H1 (cell line): ENCODE measurements at regions of chr5 and their contacts with region 1.

Region 1: GRCh38 chr5:141923448-141924352 is at the start of gene DELE1:
- DNase-seq: peak; percentile 69 to 90
- H3K4me3 ChIP-seq: peak within 1 kb of the TSS; percentile 68 to 84 (median 74)
- H3K27ac ChIP-seq: peak within 1 kb of the TSS; percentile 71; the same call in 1 of the 2 replicates
- H3K4me1 ChIP-seq: peaks cover 0 to 3% (median 3%) of the 10 kb centered on the region in 4 experiments; a peak in 3 of 7 replicates
- H3K27me3 ChIP-seq: no peaks in the 10 kb centered on the region
- CTCF ChIP-seq: peak in 1 of 3 experiments; percentile 5; a peak in 1 of 4 replicates
- EP300 ChIP-seq: no peak
- POLR2A ChIP-seq: peak in 1 of 2 experiments; percentile 84; a peak in 2 of 3 replicates
- RAD21 ChIP-seq: peak in 1 of 2 experiments; percentile 9; a peak in 1 of 4 replicates
- total RNA-seq, gene DELE1: 59.6 and 61.4 TPM in 2 replicates

Region 2: DNA sequence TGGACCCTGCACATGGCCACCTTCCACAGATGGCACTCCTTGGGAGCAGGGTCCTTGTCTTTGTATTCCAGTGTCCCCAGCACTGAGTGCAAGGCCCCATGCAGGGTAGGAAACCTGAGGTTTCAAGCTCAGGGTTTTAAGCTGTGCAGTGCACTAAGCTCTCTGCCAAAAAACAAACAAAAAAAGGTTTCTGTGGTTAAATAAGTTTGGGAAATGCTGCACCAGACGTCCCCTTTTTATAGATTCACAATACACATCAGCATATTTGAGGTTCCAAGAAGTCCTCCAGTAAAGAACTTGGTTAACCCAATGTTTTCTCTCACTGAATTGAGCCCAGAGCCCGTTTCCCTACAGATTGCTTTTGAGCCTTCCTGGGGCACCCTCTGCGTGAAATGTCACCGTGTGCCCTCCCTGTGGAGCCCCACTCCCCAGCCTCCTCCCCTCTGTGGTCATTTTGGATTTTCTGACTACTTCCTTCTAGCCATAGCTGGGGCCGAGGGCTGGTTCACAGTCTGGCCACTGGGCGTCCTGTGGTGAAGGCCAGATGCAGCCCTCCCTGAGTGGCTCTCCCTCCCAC is 17.1 kb after region 1 on chr5:
- CTCF ChIA-PET with region 1: interaction called, 5 read pairs
- POLR2A ChIA-PET with region 1: interaction called, 66 read pairs
- DNase-seq: no peak
- H3K4me3 ChIP-seq: no peak overlapping the region
- H3K27ac ChIP-seq: no peak overlapping the region
- H3K4me1 ChIP-seq: peaks cover 0 to 9% (median 7%) of the 10 kb centered on the region in 4 experiments; a peak in 5 of 7 replicates
- H3K27me3 ChIP-seq: no peaks in the 10 kb centered on the region; a peak in 1 of 7 replicates
- CTCF ChIP-seq: no peak
- EP300 ChIP-seq: no peak
- POLR2A ChIP-seq: no peak
- RAD21 ChIP-seq: no peak

Region 3: GRCh38 chr5:142053426-142054151 is 129.9 kb after region 1 on chr5:
- CTCF ChIA-PET with region 1: no interaction called
- POLR2A ChIA-PET with region 1: no interaction called
- DNase-seq: no peak
- H3K4me3 ChIP-seq: no peak overlapping the region
- H3K27ac ChIP-seq: no peak overlapping the region
- H3K4me1 ChIP-seq: peaks cover 0 to 5% (median 1%) of the 10 kb centered on the region in 4 experiments; a peak in 3 of 7 replicates
- H3K27me3 ChIP-seq: no peaks in the 10 kb centered on the region
- CTCF ChIP-seq: no peak
- EP300 ChIP-seq: no peak
- POLR2A ChIP-seq: no peak
- RAD21 ChIP-seq: no peak